ENCODE measurements at regions of chr1 and their contacts with region 1.

Region 1: DNA sequence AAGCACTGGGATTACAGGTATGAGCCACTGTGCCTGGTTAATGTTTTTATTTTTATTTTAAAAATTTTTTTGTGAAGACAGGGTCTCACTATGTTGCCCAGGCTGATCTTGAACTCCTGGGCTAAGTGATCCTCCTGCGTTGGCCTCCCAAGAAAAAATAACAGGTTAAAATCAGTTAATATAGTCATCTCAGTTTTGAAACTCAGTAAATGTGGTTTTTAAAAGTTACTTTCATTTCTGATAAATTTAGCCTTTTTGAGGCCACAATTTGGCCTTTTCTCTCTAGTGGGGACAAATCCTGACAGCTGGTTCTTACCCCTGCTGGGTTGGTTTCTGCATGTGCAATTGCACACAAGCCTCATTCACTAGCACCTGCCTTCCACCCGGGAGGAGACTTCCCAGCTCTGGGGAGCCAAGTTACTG is 13.3 kb downstream of the PMF1 start:
- DNase-seq: no peak
- H3K4me3 ChIP-seq: no peak overlapping the region
- H3K27ac ChIP-seq: no peak overlapping the region
- H3K4me1 ChIP-seq: no peaks in the 10 kb centered on the region
- H3K27me3 ChIP-seq: no peaks in the 10 kb centered on the region
- CTCF ChIP-seq: no peak
- POLR2A ChIP-seq: no peak

Region 2: GRCh38 chr1:156146020-156146768 is 79.9 kb before region 1 on chr1:
- intact Hi-C with region 1: loop called (anchors 5 kb)
- DNase-seq: peak; percentile 63
- H3K4me3 ChIP-seq: no peak overlapping the region
- H3K27ac ChIP-seq: peak overlapping the region in 1 of 2 donors; percentile 14
- H3K4me1 ChIP-seq: no peaks in the 10 kb centered on the region
- H3K27me3 ChIP-seq: no peaks in the 10 kb centered on the region
- CTCF ChIP-seq: peak; percentile 61 to 83 (median 73)
- POLR2A ChIP-seq: no peak

Region 3: GRCh38 chr1:156276966-156277381 is 50.8 kb after region 1 on chr1:
- intact Hi-C with region 1: no loop called
- DNase-seq: no peak
- H3K4me3 ChIP-seq: no peak overlapping the region
- H3K27ac ChIP-seq: no peak overlapping the region
- H3K4me1 ChIP-seq: no peaks in the 10 kb centered on the region
- H3K27me3 ChIP-seq: no peaks in the 10 kb centered on the region
- CTCF ChIP-seq: no peak
- POLR2A ChIP-seq: no peak

Measured in prostate gland (tissue), 2 donors.